ENCODE measurements at regions of chr4 and their contacts with region 1.

Region 1: DNA sequence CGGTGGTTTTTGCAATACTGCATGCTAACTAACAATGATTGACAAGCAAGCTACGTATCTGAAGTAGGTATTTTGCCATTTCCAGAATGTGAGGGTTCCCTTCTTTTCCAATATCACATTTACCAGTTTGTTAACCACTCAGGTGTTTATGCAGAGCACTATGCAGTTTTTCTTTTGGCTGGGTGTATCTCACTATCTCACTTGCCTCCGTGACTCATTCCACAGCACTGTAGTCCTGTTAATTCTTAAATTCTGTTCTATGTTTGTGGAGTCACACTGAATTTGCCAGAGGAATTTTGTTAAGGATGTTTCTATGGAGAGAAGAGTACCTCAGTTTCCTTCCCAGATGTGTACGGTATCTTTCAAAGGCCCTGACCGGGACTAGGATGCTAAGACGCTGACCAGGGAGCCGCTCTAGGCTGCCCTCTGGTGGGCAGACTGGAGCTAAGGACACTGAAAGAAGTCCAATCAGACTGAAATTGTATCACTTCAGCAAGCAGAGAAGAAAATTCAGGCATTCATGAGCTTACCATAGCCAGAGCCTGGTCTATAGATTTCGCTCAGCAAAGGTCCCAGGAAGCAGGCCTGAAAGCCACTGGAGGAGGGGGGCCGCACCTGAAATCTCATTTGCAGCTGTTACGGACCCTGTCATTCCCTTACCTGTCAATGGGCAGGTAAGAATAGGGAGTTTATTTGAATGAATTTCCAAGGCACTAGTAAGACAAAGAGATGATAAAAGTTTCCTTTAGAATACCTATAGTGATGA is 388.4 kb upstream of the SPOCK3 start:
- DNase-seq: peak; percentile 47 to 63
- H3K4me3 ChIP-seq: no peak overlapping the region
- H3K4me3 Mint-ChIP-seq: no peak overlapping the region
- H3K27ac Mint-ChIP-seq: no peak overlapping the region
- H3K4me1 ChIP-seq: no peaks in the 10 kb centered on the region
- H3K4me1 Mint-ChIP-seq: peaks cover 6% of the 10 kb centered on the region
- H3K27me3 ChIP-seq: no peaks in the 10 kb centered on the region
- H3K27me3 Mint-ChIP-seq: peaks cover 2% of the 10 kb centered on the region
- CTCF ChIP-seq: peak; percentile 63 to 82

Region 2: DNA sequence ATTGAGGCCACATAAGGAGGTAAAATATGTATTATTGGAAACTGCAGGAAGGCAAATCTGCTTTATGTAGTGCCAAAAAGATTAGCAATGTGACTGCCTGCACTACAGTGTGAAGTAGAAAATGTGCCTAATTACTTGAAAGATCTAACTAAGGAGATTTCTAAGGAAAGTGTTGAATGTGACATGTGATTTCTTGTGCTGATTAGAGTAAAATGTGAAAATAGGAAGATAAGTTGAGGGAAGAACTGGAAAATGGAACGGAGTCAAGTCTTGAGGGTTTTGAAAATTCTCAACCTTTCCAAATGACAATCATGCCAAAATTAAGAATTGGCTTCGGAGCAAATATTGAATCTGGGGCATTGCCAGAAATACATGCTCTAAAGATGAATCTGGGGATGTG is 178.8 kb before region 1 on chr4:
- CTCF ChIA-PET with region 1: no interaction called
- POLR2A ChIA-PET with region 1: no interaction called
- intact Hi-C with region 1: loop called (anchors 2 kb)
- DNase-seq: no peak
- H3K4me3 ChIP-seq: no peak overlapping the region
- H3K4me3 Mint-ChIP-seq: no peak overlapping the region
- H3K27ac Mint-ChIP-seq: no peak overlapping the region
- H3K4me1 ChIP-seq: no peaks in the 10 kb centered on the region
- H3K4me1 Mint-ChIP-seq: no peaks in the 10 kb centered on the region
- H3K27me3 ChIP-seq: no peaks in the 10 kb centered on the region
- H3K27me3 Mint-ChIP-seq: peaks cover 17% of the 10 kb centered on the region
- CTCF ChIP-seq: no peak

Region 3: DNA sequence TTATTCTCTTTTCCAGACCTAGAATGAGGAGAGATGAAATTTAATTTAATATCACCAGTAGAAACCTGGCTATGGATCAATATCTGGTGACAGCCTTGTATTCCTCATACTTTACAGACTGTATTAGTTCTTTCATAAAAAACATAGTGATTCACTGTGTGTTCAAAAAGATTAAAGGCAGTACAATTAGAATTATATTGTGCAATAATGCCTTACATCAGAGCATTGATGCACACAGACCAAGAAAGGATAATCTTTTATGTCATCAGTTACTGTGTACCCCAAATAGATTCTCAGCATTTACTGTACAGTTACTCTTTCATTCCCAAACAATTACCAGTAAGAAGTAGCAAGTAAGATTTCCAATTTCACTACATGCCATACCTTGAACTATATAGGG is 209.2 kb after region 1 on chr4:
- CTCF ChIA-PET with region 1: no interaction called
- POLR2A ChIA-PET with region 1: no interaction called
- intact Hi-C with region 1: no loop called
- DNase-seq: no peak
- H3K4me3 ChIP-seq: no peak overlapping the region
- H3K4me3 Mint-ChIP-seq: no peak overlapping the region
- H3K27ac Mint-ChIP-seq: no peak overlapping the region
- H3K4me1 ChIP-seq: no peaks in the 10 kb centered on the region
- H3K4me1 Mint-ChIP-seq: no peaks in the 10 kb centered on the region
- H3K27me3 ChIP-seq: no peaks in the 10 kb centered on the region
- H3K27me3 Mint-ChIP-seq: no peaks in the 10 kb centered on the region
- CTCF ChIP-seq: no peak

Region 4: GRCh38 chr4:169069972-169070902 is 1447.6 kb after region 1 on chr4:
- CTCF ChIA-PET with region 1: no interaction called
- POLR2A ChIA-PET with region 1: no interaction called
- intact Hi-C with region 1: no loop called
- DNase-seq: peak; percentile 90 to 93
- H3K4me3 ChIP-seq: no peak overlapping the region
- H3K4me3 Mint-ChIP-seq: peak overlapping the region; percentile 60
- H3K27ac Mint-ChIP-seq: peak overlapping the region; percentile 92
- H3K4me1 ChIP-seq: peaks cover 50% of the 10 kb centered on the region
- H3K4me1 Mint-ChIP-seq: peaks cover 30% of the 10 kb centered on the region
- H3K27me3 ChIP-seq: no peaks in the 10 kb centered on the region
- H3K27me3 Mint-ChIP-seq: no peaks in the 10 kb centered on the region
- CTCF ChIP-seq: no peak

Measured in Caco-2 (cell line).